ENCODE measurements at regions of chr12 and their contacts with region 1.

Region 1: GRCh38 chr12:7188562-7189397 is 706 bp upstream of the PEX5 start:
- DNase-seq: peak; percentile 87
- H3K4me3 Mint-ChIP-seq: peak overlapping the region; percentile 88
- H3K27ac Mint-ChIP-seq: peak overlapping the region; percentile 95
- H3K4me1 Mint-ChIP-seq: peaks cover 36% of the 10 kb centered on the region
- H3K27me3 Mint-ChIP-seq: no peaks in the 10 kb centered on the region

Region 2: DNA sequence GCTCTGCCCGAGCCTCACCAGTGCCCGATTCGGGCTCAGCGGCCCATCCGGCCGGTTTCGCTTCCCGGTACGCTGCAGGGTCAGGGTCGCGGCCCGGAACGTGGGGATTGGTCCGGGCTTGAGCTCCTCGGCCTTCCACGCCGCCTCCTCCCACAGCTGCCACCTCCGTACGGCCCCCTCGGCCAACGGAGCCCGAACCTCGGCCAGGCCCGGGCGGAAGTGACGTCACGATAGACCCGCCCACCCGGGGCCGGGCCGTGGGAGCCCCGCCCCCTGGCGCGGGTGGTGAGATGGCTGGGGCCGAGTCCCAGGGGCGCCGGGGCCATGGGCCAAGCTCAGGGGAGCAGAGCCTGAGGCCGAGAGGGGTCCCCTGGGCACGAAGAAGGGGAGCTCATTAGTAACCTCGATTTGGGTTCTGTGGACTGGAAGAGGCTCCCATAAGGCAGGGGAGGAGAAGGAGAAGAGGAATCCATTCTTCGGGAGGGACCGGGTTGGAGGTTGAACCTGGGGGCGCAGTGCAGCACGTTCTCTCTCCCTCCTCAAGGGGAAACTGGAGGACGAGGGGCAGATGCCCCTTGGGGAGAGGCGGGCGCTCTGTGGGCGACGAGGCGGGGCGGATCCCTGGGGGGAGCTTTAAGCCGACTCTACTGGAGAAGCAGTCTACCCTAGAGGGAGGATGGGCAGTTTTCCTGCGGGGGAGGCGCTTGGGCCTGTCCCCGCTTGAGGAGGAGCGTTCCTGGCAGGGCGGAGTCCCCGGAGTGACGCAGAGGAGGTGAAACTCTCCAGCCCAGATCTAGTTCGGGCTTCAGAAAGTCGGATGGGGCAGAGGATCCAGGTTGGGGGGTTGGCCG is 435.6 kb before region 1 on chr12 and contains the start of gene MLF2:
- CTCF ChIA-PET with region 1: no interaction called
- intact Hi-C with region 1: no loop called
- DNase-seq: peak; percentile 99
- H3K4me3 Mint-ChIP-seq: peak within 1 kb of the TSS; percentile 96
- H3K27ac Mint-ChIP-seq: peak within 1 kb of the TSS; percentile 97
- H3K4me1 Mint-ChIP-seq: peaks cover 25% of the 10 kb centered on the region
- H3K27me3 Mint-ChIP-seq: no peaks in the 10 kb centered on the region
- total RNA-seq, gene MLF2: 140 to 143 TPM

Region 3: DNA sequence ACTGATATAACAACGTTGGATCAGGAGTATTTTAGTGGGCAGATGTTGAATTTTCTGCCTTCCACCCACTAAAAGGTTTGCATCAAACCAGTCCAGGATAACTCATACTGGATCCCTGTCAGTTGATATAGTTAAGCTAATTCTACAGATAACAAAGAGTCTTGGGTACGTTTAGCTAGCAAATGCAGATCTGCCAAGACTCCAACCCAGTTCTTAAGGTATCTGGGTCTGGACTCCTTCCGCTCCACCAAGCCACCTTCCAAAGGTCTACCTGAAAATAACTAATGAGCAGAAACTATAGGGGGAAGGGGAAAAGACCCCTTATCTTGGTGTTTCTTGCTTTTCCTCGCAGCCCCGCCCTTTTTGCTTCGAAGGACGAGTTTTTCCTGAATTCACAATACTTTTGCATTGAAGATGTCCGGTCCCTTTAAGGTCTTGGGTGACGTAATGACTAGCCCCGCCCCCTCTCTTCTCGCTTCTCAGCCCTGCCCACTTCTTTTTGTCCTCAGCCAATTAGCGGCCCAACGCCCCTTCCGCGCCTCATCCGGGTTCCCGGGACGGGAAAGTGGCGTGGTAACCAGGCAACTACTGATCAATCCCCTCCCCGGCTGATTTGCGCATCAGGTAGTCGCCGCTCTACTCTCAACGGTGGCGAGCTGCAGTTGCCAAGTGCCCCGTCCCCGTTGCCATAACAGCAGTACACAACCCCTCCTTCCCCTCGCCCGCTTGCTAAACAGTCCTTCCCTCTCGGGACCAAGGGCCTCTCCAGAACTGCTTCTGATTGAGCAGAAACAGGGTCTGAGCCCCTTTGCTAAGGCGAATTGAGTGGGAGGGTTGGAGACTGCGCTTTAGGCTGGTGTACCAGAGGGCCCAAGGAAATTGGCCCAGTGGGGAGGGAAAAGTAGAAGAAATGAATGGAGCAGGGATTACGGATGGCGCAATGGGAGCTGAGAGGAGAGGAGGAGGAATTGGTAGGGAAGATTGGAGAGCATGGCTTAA is 284.2 kb before region 1 on chr12 and contains the start of gene LRRC23:
- CTCF ChIA-PET with region 1: no interaction called
- intact Hi-C with region 1: loop called (anchors 1 kb)
- DNase-seq: peak; percentile 99
- H3K4me3 Mint-ChIP-seq: no peak within 1 kb of the TSS
- H3K27ac Mint-ChIP-seq: no peak within 1 kb of the TSS
- H3K4me1 Mint-ChIP-seq: peaks cover 3% of the 10 kb centered on the region
- H3K27me3 Mint-ChIP-seq: no peaks in the 10 kb centered on the region
- total RNA-seq, gene LRRC23: 6.3 to 6.4 TPM

Region 4: GRCh38 chr12:6965026-6965661 is 223.6 kb before region 1 on chr12:
- CTCF ChIA-PET with region 1: no interaction called
- intact Hi-C with region 1: loop called (anchors 1 kb)
- DNase-seq: peak; percentile 95
- H3K4me3 Mint-ChIP-seq: no peak overlapping the region
- H3K27ac Mint-ChIP-seq: peak overlapping the region; percentile 93
- H3K4me1 Mint-ChIP-seq: peaks cover 81% of the 10 kb centered on the region
- H3K27me3 Mint-ChIP-seq: no peaks in the 10 kb centered on the region

Region 5: DNA sequence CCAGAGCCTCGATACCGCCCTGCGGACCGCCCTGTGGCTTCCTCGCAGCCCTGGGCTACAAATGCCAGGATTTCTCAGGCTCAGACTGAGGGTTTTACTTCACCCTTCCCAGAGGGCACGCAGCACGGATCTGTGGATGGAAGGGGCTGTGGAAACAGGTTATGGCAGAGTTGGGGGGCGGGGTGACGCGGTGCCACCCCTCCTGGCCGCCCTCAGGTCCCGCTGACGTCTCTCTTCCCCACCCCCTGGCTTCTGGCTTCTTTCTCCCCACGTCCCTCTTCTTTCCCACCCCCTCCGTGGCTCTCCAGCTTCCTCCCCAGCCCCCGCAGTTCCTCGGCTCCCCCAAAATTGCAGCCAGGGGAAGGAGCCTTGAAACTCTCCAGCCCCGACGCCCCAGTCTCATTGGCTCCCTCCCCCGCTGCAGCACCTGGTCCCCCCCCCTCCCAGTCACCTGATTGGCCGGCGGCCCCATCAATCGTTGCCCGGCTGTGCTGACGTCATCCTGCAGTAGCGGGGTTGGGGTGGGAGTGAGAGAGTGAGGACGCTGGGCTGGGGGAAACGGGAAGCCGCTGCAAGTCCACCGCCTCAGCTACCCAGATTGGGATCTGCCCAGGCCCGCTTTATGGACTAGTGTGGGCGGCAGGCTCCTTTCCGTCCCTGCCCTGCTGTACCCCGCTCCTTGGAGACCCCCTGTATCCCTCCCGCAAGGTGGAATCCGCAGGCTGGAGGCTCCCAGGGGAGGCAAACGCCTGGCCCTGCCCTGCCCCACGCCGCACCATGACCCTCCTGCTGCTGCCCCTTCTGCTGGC is 58.7 kb before region 1 on chr12 and contains the start of gene CLSTN3:
- CTCF ChIA-PET with region 1: no interaction called
- intact Hi-C with region 1: loop called (anchors 1 kb)
- DNase-seq: peak; percentile 87
- H3K4me3 Mint-ChIP-seq: peak within 1 kb of the TSS; percentile 82
- H3K27ac Mint-ChIP-seq: peak within 1 kb of the TSS; percentile 55
- H3K4me1 Mint-ChIP-seq: peaks cover 27% of the 10 kb centered on the region
- H3K27me3 Mint-ChIP-seq: no peaks in the 10 kb centered on the region
- total RNA-seq, gene CLSTN3: 18.3 to 21.8 TPM

Region 6: DNA sequence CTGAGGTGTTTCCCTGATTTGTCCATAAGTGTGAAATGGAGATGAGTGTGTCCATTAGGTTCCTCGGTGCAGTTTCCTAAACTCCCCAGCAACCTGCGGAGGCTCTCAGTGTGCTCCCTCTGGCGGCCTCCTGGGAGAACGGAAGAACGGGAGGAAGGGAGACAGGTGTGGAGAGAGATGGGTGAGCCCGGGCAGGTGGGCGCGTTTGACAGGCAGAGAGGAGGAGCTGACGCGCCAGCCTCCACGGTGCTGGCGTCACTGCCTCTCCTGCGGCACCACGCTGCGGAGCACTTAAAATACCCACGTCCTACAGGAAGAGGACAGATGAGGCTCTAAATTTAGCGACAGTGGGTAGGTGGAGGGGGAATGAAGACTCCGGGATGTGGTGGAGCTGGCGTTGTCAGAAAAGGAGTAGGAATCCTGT is 26.1 kb before region 1 on chr12:
- CTCF ChIA-PET with region 1: interaction called, 5 read pairs
- intact Hi-C with region 1: loop called (anchors 1 kb)
- DNase-seq: peak; percentile 56
- H3K4me3 Mint-ChIP-seq: peak overlapping the region; percentile 44
- H3K27ac Mint-ChIP-seq: no peak overlapping the region
- H3K4me1 Mint-ChIP-seq: peaks cover 8% of the 10 kb centered on the region
- H3K27me3 Mint-ChIP-seq: peaks cover 7% of the 10 kb centered on the region